Caco-2 (cell line): ENCODE measurements at regions of chr21 and their contacts with region 1.

Region 1: GRCh38 chr21:42878993-42879787 is at the start of gene WDR4:
- DNase-seq: peak; percentile 97 to 98
- H3K4me3 ChIP-seq: peak within 1 kb of the TSS; percentile 86
- H3K4me3 Mint-ChIP-seq: peak within 1 kb of the TSS; percentile 90
- H3K27ac Mint-ChIP-seq: peak within 1 kb of the TSS; percentile 92
- H3K4me1 ChIP-seq: peaks cover 4% of the 10 kb centered on the region; the same call in 1 of the 2 replicates
- H3K4me1 Mint-ChIP-seq: peaks cover 14% of the 10 kb centered on the region
- H3K27me3 ChIP-seq: no peaks in the 10 kb centered on the region
- H3K27me3 Mint-ChIP-seq: no peaks in the 10 kb centered on the region
- CTCF ChIP-seq: no peak
- total RNA-seq, gene WDR4: 35.0 and 35.4 TPM in 2 replicates

Region 2: GRCh38 chr21:42868196-42868595 is 11.0 kb before region 1 on chr21:
- CTCF ChIA-PET with region 1: interaction called, 3 read pairs
- POLR2A ChIA-PET with region 1: interaction called, 16 read pairs
- intact Hi-C with region 1: no loop called
- DNase-seq: no peak
- H3K4me3 ChIP-seq: no peak overlapping the region
- H3K4me3 Mint-ChIP-seq: no peak overlapping the region
- H3K27ac Mint-ChIP-seq: no peak overlapping the region
- H3K4me1 ChIP-seq: no peaks in the 10 kb centered on the region
- H3K4me1 Mint-ChIP-seq: no peaks in the 10 kb centered on the region
- H3K27me3 ChIP-seq: no peaks in the 10 kb centered on the region
- H3K27me3 Mint-ChIP-seq: no peaks in the 10 kb centered on the region
- CTCF ChIP-seq: no peak

Region 3: DNA sequence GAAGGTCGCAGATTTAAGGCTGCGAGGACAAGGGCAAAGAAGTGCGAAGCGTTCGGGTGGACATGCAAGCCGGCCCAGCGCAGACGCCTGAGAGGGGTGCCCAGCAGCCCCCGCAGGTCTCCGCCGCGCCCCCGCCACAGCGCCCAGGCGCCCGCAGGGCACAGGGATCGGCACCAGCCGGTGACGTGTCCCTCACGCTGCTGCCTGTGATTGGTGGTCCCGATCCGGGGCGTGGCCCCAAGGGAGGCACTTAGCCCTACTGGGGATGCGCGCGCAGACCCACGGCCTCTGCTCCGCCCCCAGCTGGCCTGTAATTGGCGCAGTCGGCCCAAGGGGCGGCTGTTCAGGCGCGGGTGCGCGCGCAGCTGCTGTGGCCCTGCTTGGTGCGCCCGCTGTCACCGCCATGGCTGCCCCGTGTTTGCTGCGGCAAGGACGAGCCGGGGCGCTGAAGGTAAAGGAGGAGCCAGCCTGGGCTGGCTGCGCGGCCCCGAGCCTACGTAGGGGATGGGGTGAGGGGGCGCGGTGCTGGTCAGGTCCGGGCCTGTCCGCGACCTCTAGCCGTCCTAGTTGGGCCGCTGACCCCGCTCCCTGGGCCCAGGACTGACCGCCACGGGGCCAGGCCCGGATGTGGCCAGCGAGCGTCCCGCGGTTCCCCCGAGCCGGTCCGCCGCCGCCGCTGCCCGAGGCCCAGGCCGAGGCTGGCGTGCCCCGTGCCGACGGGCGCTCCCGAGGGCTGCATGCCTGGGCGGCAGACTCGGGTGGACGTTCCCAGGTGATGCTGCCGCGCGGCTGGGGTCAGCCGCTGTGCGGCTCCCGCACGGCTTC is 14.0 kb after region 1 on chr21 and contains the start of gene NDUFV3:
- CTCF ChIA-PET with region 1: interaction called, 4 read pairs
- POLR2A ChIA-PET with region 1: interaction called, 6 read pairs
- intact Hi-C with region 1: loop called (anchors 2 kb)
- DNase-seq: peak; percentile 98 to 99
- H3K4me3 ChIP-seq: peak within 1 kb of the TSS; percentile 92
- H3K4me3 Mint-ChIP-seq: peak within 1 kb of the TSS; percentile 90
- H3K27ac Mint-ChIP-seq: peak within 1 kb of the TSS; percentile 92
- H3K4me1 ChIP-seq: no peaks in the 10 kb centered on the region
- H3K4me1 Mint-ChIP-seq: no peaks in the 10 kb centered on the region
- H3K27me3 ChIP-seq: no peaks in the 10 kb centered on the region
- H3K27me3 Mint-ChIP-seq: no peaks in the 10 kb centered on the region
- CTCF ChIP-seq: no peak
- total RNA-seq, gene NDUFV3: 32.5 and 33.8 TPM in 2 replicates